ENCODE measurements at regions of chr6 and their contacts with region 1.

Region 1: DNA sequence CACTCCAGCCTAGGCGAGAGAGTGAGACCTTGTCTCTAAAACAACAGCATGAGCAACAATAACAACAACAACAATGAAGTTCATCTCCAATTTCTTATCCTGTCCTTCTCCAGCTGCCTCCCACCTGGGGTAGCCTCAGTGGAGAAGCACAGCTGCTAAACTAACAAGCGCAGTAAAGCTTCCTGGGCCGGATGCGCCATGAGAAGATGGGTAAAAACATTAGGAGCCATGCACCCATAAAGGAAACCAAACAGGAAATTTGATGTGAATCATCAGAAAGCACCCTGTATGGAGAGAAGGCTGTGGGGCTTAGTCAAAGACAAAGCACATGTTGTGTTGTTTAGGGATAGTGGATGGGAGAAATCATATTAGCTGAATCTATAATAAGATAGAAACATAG is 61.1 kb upstream of the CCN6 start:
- DNase-seq: no peak
- ATAC-seq: peak; percentile 43
- H3K4me3 Mint-ChIP-seq: peak overlapping the region; percentile 29
- H3K27ac Mint-ChIP-seq: peak overlapping the region; percentile 79
- H3K4me1 Mint-ChIP-seq: peaks cover 74% of the 10 kb centered on the region
- H3K27me3 Mint-ChIP-seq: no peaks in the 10 kb centered on the region

Region 2: GRCh38 chr6:111873178-111874024 is 119.5 kb before region 1 on chr6 and contains the start of gene FYN:
- POLR2A ChIA-PET with region 1: interaction called, 11 read pairs
- DNase-seq: peak; percentile 99
- ATAC-seq: peak; percentile 86
- H3K4me3 Mint-ChIP-seq: peak within 1 kb of the TSS; percentile 95
- H3K27ac Mint-ChIP-seq: peak within 1 kb of the TSS; percentile 92
- H3K4me1 Mint-ChIP-seq: peaks cover 29% of the 10 kb centered on the region
- H3K27me3 Mint-ChIP-seq: peaks cover 2% of the 10 kb centered on the region
- total RNA-seq, gene FYN: 363 to 409 TPM

Region 3: DNA sequence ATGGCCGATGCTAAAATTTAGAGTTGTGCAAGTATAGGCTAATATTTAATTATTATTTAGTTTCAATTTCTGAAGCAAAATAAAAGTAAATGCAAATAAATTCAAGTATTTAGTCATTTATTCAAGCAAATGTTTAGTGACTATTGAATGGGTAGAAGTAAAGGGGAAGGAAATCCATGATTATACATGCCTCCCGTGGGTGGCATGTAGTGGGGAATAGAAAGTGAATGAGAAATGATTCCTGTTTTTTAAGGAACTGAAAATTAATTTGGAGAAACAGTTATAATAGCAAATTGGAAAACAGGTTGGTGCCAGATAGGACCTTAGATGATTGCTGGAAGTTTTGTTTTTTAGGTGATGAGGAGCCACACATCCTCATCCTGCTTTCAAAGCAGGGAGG is 129.9 kb after region 1 on chr6:
- POLR2A ChIA-PET with region 1: no interaction called
- DNase-seq: no peak
- ATAC-seq: no peak
- H3K4me3 Mint-ChIP-seq: no peak overlapping the region
- H3K27ac Mint-ChIP-seq: no peak overlapping the region
- H3K4me1 Mint-ChIP-seq: peaks cover 5% of the 10 kb centered on the region
- H3K27me3 Mint-ChIP-seq: peaks cover 6% of the 10 kb centered on the region

Measured in activated naive CD8-positive, alpha-beta T cell treated with anti-CD3 and anti-CD28 coated beads, Interleukin-2, amount 10 ng/mL, durations not matched to agents 7 days and 5 days (primary cell).